Cardiac septum (tissue), 1 donor: ENCODE measurements at regions of chrX and their contacts with region 1.

Region 1: DNA sequence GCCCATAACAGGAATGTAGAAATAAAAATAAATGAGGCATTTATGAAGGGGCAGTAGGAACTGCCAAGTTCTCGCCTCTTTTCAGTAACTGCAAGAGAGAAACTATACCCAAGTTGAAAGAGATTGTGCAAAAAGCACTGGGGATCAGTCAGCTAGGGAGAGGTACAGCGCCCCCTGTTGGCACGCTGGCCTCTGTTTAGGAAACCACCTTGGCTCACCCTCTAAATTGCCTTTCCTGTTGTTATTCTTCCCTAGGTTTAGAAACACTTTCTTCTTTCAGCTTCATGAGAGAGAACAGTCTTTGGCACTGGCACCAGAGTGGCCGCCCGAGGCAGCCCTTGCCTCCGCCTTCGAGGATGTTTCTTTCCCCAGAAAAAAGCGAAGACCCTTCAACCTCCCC is 348.5 kb downstream of the MID1IP1 start:
- DNase-seq: no peak

Region 2: DNA sequence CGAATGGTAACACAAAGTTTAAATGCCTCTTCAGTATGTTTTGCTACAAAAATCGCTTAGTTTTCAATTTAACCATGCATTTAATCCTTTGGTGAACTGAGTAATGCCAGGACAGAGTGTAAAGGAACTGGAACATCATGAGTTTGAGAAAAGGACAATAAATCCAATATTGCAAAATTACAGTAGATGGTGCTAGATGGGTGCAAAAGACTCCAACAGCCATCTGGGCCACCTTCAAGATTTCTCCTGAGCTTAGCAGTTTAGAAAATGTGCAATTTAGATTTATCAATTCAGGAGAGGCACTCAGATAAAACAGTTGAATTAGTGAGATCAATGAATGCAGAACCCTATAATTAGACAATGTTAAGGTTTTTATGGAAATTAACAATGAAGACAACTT is 381.7 kb before region 1 on chrX:
- intact Hi-C with region 1: loop called (anchors 5 kb)
- DNase-seq: no peak